Activated CD8-positive, alpha-beta T cell treated with anti-CD3 and anti-CD28 coated beads for 36 hours (primary cell): ENCODE measurements at regions of chr5 and their contacts with region 1.

Region 1: DNA sequence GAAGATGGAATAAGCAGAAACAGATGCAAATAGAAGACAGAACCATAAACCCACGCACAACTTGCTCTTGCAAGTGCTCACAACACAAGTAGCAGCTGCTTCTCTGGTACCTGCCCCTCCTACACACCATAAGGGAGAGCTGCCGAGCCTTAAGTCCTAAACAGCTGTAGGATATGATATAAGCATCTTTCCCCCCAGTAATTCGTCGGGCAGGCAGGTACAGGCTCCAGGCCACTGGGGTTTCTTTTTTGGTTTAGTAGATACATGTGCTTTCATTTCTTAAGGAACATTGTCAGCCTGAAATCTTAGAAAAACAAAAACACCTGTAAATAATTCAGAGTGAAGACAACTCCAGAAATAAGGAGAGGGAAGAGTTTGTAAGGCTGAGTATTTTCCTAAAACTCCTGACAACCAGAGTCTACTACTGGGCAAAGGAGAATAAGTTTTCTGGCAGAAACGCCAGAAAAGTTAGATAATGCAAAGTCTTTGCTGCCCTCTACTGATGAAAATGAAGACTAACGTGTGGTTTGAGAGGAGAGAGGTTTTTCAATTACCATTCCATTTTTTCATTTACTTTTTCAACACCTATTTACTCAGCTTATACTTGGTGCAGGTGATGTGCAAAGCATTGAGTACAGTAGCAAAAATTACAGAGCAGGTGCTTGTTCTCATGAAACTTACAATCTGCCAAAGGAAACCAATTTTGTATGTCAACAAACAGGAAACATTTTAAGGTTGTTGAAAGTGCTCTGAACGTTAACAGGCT is 20.1 kb upstream of the TCERG1 start:
- DNase-seq: no peak
- ATAC-seq: peak; percentile 67
- H3K4me3 Mint-ChIP-seq: no peak overlapping the region
- H3K27ac Mint-ChIP-seq: no peak overlapping the region
- H3K4me1 Mint-ChIP-seq: peaks cover 4% of the 10 kb centered on the region
- H3K27me3 Mint-ChIP-seq: peaks cover 17% of the 10 kb centered on the region
- CTCF ChIP-seq: peak; percentile 67

Region 2: DNA sequence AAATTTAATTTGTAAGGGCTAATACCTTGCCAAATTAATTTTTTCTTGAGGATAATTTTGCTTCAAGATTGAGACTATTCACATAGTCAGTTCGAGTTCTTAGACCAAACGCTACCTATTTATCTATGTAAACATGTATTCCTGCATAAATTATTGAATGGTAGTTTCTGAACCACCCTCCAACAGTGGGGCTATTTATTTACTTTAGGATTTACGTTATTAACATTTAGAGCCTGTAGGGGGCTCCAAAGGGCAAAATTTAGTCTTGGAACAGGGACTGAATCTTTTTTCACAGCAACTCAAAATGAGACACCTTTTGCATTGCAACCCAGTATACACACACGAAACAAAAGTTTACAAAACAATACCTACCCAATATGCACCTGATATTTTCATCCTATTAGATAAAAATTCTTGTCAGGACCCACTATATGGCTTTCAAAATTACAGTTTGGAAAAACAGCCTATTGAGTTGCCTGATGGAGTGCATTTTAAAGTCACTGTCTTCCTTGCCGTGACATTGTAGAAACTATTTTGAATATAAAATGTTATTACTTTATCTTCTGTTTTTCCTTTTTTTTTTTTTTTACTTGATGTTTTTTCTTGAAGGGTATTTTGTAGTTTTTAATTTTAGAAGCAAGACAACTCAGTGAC is 135.5 kb before region 1 on chr5:
- CTCF ChIA-PET with region 1: interaction called, 9 read pairs
- POLR2A ChIA-PET with region 1: no interaction called
- intact Hi-C with region 1: loop called (anchors 1 kb)
- DNase-seq: peak; percentile 32
- ATAC-seq: peak; percentile 77
- H3K4me3 Mint-ChIP-seq: no peak overlapping the region
- H3K27ac Mint-ChIP-seq: no peak overlapping the region
- H3K4me1 Mint-ChIP-seq: no peaks in the 10 kb centered on the region
- H3K27me3 Mint-ChIP-seq: no peaks in the 10 kb centered on the region
- CTCF ChIP-seq: peak; percentile 84

Region 3: GRCh38 chr5:146340260-146341081 is 86.6 kb before region 1 on chr5:
- CTCF ChIA-PET with region 1: no interaction called
- POLR2A ChIA-PET with region 1: no interaction called
- intact Hi-C with region 1: loop called (anchors 10 kb)
- DNase-seq: peak; percentile 67
- ATAC-seq: no peak
- H3K4me3 Mint-ChIP-seq: no peak overlapping the region
- H3K27ac Mint-ChIP-seq: no peak overlapping the region
- H3K4me1 Mint-ChIP-seq: peaks cover 8% of the 10 kb centered on the region
- H3K27me3 Mint-ChIP-seq: peaks cover 87% of the 10 kb centered on the region
- CTCF ChIP-seq: no peak

Region 4: GRCh38 chr5:146440870-146441495 is 13.9 kb after region 1 on chr5:
- CTCF ChIA-PET with region 1: interaction called, 10 read pairs
- POLR2A ChIA-PET with region 1: no interaction called
- intact Hi-C with region 1: no loop called
- DNase-seq: no peak
- ATAC-seq: no peak
- H3K4me3 Mint-ChIP-seq: no peak overlapping the region
- H3K27ac Mint-ChIP-seq: no peak overlapping the region
- H3K4me1 Mint-ChIP-seq: no peaks in the 10 kb centered on the region
- H3K27me3 Mint-ChIP-seq: peaks cover 14% of the 10 kb centered on the region
- CTCF ChIP-seq: no peak

Region 5: GRCh38 chr5:146475190-146475801 is 48.3 kb after region 1 on chr5:
- CTCF ChIA-PET with region 1: no interaction called
- POLR2A ChIA-PET with region 1: no interaction called
- intact Hi-C with region 1: no loop called
- DNase-seq: no peak
- ATAC-seq: no peak
- H3K4me3 Mint-ChIP-seq: no peak overlapping the region
- H3K27ac Mint-ChIP-seq: no peak overlapping the region
- H3K4me1 Mint-ChIP-seq: no peaks in the 10 kb centered on the region
- H3K27me3 Mint-ChIP-seq: no peaks in the 10 kb centered on the region
- CTCF ChIP-seq: no peak

Region 6: GRCh38 chr5:146541958-146542849 is 115.2 kb after region 1 on chr5:
- CTCF ChIA-PET with region 1: no interaction called
- POLR2A ChIA-PET with region 1: no interaction called
- intact Hi-C with region 1: no loop called
- DNase-seq: peak; percentile 83
- ATAC-seq: peak; percentile 98
- H3K4me3 Mint-ChIP-seq: no peak overlapping the region
- H3K27ac Mint-ChIP-seq: no peak overlapping the region
- H3K4me1 Mint-ChIP-seq: no peaks in the 10 kb centered on the region
- H3K27me3 Mint-ChIP-seq: peaks cover 1% of the 10 kb centered on the region
- CTCF ChIP-seq: peak; percentile 93